ENCODE measurements at regions of chr10 and their contacts with region 1.

Region 1: GRCh38 chr10:77494327-77494726 is 143.3 kb downstream of the KCNMA1 start:
- DNase-seq: peak; percentile 69
- H3K4me3 ChIP-seq: no peak overlapping the region
- H3K27ac ChIP-seq: no peak overlapping the region
- H3K4me1 ChIP-seq: peaks cover 9 to 20% of the 10 kb centered on the region in 2 experiments; a peak in 3 of 4 replicates
- H3K27me3 ChIP-seq: no peaks in the 10 kb centered on the region
- CTCF ChIP-seq: peak; percentile 58
- EP300 ChIP-seq: no peak
- RAD21 ChIP-seq: peak; percentile 71

Region 2: DNA sequence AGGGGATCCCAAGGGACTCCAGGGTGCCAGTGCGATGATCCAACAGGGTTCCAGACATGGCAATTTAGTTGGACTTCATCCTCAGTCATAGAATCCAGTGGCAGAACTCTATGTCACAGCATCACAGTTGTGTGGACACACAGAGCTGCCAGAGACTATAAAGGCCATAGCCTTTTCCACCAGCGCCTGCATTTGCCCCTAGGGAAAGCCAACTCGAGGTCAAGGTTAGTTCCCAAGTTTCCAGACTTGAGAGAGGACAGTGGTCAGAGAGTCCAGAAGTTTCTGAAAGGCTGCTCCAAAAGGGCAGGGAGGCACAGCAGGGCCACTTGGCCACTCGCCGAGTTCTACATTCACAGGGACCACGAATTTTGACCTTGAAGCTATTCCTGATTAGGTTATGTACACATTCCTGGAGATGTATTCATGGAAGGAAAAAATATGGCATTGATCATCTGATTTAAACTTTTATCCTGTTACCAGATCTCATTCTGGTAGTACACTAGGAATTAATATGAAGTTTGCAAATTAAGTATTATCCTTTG is 26.8 kb before region 1 on chr10:
- CTCF ChIA-PET with region 1: no interaction called
- POLR2A ChIA-PET with region 1: no interaction called
- DNase-seq: no peak
- H3K4me3 ChIP-seq: no peak overlapping the region
- H3K27ac ChIP-seq: no peak overlapping the region
- H3K4me1 ChIP-seq: no peaks in the 10 kb centered on the region
- H3K27me3 ChIP-seq: no peaks in the 10 kb centered on the region
- CTCF ChIP-seq: no peak
- EP300 ChIP-seq: no peak
- RAD21 ChIP-seq: no peak

Region 3: GRCh38 chr10:77504873-77505257 is 10.5 kb after region 1 on chr10:
- CTCF ChIA-PET with region 1: interaction called, 29 read pairs
- POLR2A ChIA-PET with region 1: no interaction called
- DNase-seq: no peak
- H3K4me3 ChIP-seq: no peak overlapping the region
- H3K27ac ChIP-seq: peak overlapping the region; percentile 76 to 91; a peak in 3 of 4 replicates
- H3K4me1 ChIP-seq: peaks cover 23 to 58% of the 10 kb centered on the region in 2 experiments
- H3K27me3 ChIP-seq: no peaks in the 10 kb centered on the region
- CTCF ChIP-seq: peak; percentile 11; the same call in 1 of the 2 replicates
- EP300 ChIP-seq: peak in 1 of 2 experiments; percentile 78; a peak in 1 of 4 replicates
- RAD21 ChIP-seq: no peak

Region 4: DNA sequence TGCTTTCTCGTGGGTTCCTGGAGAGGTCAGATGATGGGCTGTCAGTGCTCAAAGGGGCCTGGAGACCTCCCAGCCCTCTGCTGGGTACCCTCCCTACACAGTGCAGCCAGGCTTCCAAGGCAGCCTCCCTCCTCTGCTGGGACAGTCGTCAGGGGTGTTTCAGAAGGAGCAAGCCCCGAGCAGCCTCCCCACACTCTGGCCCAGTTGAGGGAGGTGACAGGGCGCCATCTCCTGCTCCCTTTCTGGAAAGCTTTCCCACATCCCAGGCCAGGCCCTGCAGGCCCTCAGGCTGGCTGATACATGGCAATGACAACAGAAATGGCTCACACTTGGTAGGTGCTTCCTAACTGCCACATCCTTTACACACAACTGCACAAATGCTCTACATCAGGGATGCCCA is 111.1 kb after region 1 on chr10:
- CTCF ChIA-PET with region 1: interaction called, 10 read pairs
- POLR2A ChIA-PET with region 1: no interaction called
- DNase-seq: peak; percentile 53
- H3K4me3 ChIP-seq: no peak overlapping the region
- H3K27ac ChIP-seq: no peak overlapping the region
- H3K4me1 ChIP-seq: peaks cover 6 to 21% of the 10 kb centered on the region in 2 experiments; a peak in 2 of 4 replicates
- H3K27me3 ChIP-seq: no peaks in the 10 kb centered on the region
- CTCF ChIP-seq: peak; percentile 41
- EP300 ChIP-seq: no peak
- RAD21 ChIP-seq: peak; percentile 71